ENCODE measurements at regions of chr1 and their contacts with region 1.

Region 1: DNA sequence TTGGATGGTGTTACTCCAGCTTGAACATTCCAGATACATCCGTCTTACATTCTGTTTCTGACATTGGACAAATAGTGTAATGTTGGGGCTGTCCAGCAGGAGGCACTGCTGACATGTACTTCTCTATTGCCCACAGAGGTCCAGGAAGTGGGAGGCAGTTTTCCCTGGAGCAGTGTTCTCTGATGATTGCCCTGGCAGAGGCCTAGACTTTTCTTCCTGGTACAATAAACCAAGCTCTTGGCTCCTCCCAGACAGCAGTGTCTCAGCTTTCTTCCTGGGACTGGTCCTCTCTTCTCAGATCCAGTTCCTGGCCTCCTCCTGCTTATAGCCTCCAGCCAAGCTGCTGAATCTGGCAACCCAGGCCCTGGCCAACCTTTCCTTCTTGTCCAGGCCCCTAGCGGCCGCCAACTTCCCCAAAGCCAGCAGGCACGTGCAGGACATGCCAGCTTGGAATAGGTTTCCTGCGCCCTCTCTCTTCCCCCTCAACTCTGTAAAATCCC is 14.9 kb upstream of the IFNLR1 start:
- DNase-seq: peak; percentile 65
- H3K4me3 Mint-ChIP-seq: no peak overlapping the region
- H3K27ac Mint-ChIP-seq: no peak overlapping the region
- H3K4me1 Mint-ChIP-seq: peaks cover 21% of the 10 kb centered on the region
- H3K27me3 Mint-ChIP-seq: peaks cover 6% of the 10 kb centered on the region

Region 2: DNA sequence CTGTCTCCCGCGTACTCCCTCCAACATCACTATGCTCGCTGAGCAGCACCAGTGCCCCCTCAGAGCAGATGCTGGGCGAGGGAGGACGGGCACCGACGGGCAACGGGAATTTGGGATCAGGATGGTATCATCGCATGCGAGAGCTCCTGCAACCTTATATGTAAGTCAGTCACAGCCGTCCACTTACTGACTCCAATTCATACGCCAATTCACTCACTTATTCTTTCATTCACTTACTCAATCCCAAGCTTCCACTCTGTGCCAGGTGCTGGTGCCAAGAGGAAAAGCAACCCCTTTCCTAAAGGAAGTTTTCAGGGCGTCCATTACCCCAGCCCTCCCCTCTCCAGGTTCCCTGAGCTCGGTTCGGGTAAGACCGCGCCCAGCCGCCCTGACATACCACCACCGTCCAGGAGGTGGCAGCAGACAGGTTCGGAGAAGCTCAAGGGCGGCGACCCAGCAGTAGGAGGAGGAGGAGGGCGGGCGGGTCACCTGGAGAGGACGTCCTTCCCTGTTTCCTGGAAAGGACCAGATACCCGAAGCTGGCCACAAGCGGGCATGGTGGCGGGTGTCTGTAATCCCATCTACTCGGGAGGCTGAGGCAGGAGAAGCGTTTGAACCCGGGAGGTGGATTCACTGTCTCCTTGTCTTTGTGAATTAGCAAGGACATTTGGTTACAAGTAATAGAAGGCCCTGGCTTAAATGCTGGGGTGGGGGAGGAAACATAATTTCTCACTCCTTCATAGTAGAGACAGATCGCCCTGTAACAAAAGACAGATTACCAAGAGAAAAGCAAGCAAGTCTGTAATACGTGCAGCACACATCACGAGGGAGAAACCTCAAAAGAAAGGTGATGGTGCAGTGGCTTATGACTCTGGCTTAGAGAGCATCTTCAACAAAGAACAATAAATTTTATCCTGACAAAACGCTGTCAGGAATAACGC is 51.5 kb before region 1 on chr1:
- CTCF ChIA-PET with region 1: interaction called, 60 read pairs
- POLR2A ChIA-PET with region 1: interaction called, 5 read pairs
- DNase-seq: peak; percentile 90
- H3K4me3 Mint-ChIP-seq: peak overlapping the region; percentile 48
- H3K27ac Mint-ChIP-seq: no peak overlapping the region
- H3K4me1 Mint-ChIP-seq: peaks cover 25% of the 10 kb centered on the region
- H3K27me3 Mint-ChIP-seq: peaks cover 33% of the 10 kb centered on the region

Region 3: GRCh38 chr1:24216276-24217074 is 14.5 kb after region 1 on chr1:
- CTCF ChIA-PET with region 1: no interaction called
- POLR2A ChIA-PET with region 1: no interaction called
- DNase-seq: no peak
- H3K4me3 Mint-ChIP-seq: no peak overlapping the region
- H3K27ac Mint-ChIP-seq: no peak overlapping the region
- H3K4me1 Mint-ChIP-seq: no peaks in the 10 kb centered on the region
- H3K27me3 Mint-ChIP-seq: peaks cover 58% of the 10 kb centered on the region

Region 4: DNA sequence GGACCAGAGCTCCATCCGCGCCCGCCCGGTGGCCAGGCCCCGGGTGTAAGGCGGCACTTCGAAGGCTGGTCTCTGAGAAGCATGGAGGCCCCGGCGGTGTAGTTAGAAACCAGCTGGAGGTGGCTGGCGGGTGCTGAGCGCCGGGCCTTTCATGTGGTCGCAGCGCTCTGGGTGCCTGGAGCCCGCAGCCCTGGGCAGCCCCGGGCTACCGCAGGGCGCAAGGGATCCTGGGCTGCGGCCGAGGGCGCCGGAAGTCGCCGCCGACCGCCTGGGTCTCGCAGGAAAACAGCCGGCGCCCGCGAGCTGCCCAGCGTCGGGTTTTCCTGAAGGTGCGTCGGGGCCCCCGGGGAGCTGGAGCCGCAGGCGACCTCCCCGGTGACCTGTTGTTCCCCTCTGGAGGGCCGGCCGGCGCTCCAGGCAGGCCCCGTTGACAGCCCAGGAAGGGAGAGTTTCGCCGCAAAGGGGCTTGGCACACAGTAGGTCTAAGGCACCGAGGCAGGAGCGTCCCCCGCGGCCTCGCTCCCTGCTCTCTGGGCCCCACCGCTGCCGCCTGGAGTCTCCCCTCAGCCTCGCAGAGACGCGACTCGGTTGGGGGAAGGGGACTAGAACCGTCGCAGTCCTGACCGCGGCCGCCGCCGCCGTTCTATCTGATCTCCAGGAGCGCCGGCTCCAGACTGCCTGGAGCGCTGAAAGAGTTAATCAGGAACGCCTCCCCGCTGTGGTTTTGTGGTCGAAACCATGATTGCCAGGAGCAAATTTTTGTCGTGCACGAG is 119.9 kb after region 1 on chr1:
- CTCF ChIA-PET with region 1: interaction called, 10 read pairs
- POLR2A ChIA-PET with region 1: interaction called, 3 read pairs
- DNase-seq: peak; percentile 81
- H3K4me3 Mint-ChIP-seq: peak overlapping the region; percentile 57
- H3K27ac Mint-ChIP-seq: no peak overlapping the region
- H3K4me1 Mint-ChIP-seq: peaks cover 41% of the 10 kb centered on the region
- H3K27me3 Mint-ChIP-seq: peaks cover 89% of the 10 kb centered on the region

Region 5: GRCh38 chr1:24586970-24587820 is 385.2 kb after region 1 on chr1:
- CTCF ChIA-PET with region 1: interaction called, 19 read pairs
- POLR2A ChIA-PET with region 1: no interaction called
- DNase-seq: peak; percentile 54
- H3K4me3 Mint-ChIP-seq: no peak overlapping the region
- H3K27ac Mint-ChIP-seq: no peak overlapping the region
- H3K4me1 Mint-ChIP-seq: peaks cover 8% of the 10 kb centered on the region
- H3K27me3 Mint-ChIP-seq: peaks cover 8% of the 10 kb centered on the region

Measured in activated CD4-positive, alpha-beta memory T cell treated with anti-CD3 and anti-CD28 coated beads, Interleukin-2, amount 10 ng/mL, durations not matched to agents 7 days and 5 days (primary cell).